ENCODE measurements at regions of chr1 and their contacts with region 1.

Region 1: GRCh38 chr1:218345673-218346390 is 696 bp downstream of the TGFB2 start:
- DNase-seq: peak; percentile 81
- H3K4me3 Mint-ChIP-seq: no peak overlapping the region
- H3K27ac Mint-ChIP-seq: no peak overlapping the region
- H3K4me1 Mint-ChIP-seq: peaks cover 41% of the 10 kb centered on the region
- H3K27me3 Mint-ChIP-seq: no peaks in the 10 kb centered on the region
- CTCF ChIP-seq: no peak

Region 2: GRCh38 chr1:218377143-218377660 is 31.4 kb after region 1 on chr1:
- CTCF ChIA-PET with region 1: interaction called, 8 read pairs
- POLR2A ChIA-PET with region 1: interaction called, 61 read pairs
- intact Hi-C with region 1: loop called (anchors 1 kb)
- DNase-seq: peak; percentile 99
- H3K4me3 Mint-ChIP-seq: peak overlapping the region; percentile 39
- H3K27ac Mint-ChIP-seq: peak overlapping the region; percentile 88
- H3K4me1 Mint-ChIP-seq: peaks cover 74% of the 10 kb centered on the region
- H3K27me3 Mint-ChIP-seq: no peaks in the 10 kb centered on the region
- CTCF ChIP-seq: no peak

Region 3: DNA sequence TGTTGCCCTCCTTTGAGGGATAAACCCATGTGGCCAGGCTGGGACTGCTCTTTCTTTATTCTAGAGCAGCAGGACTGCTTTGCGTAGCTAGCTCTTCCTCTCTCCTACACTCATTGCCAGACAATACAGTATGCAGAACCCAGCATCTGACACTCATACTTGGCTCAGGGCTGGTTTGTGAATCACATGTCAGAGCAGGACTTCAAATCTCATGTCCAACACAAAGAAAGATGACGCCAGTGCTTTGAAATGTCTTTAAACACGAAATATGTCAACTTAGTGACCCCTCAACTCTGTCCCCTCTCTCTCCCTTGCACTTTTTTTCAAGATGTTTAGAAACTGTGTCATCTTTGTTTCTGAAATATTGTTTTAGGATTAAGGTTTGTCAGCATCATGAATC is 134.3 kb after region 1 on chr1:
- CTCF ChIA-PET with region 1: interaction called, 8 read pairs
- POLR2A ChIA-PET with region 1: interaction called, 18 read pairs
- intact Hi-C with region 1: no loop called
- DNase-seq: peak; percentile 87
- H3K4me3 Mint-ChIP-seq: no peak overlapping the region
- H3K27ac Mint-ChIP-seq: peak overlapping the region; percentile 29
- H3K4me1 Mint-ChIP-seq: peaks cover 59% of the 10 kb centered on the region
- H3K27me3 Mint-ChIP-seq: no peaks in the 10 kb centered on the region
- CTCF ChIP-seq: no peak

Region 4: GRCh38 chr1:218521375-218522169 is 175.7 kb after region 1 on chr1:
- CTCF ChIA-PET with region 1: interaction called, 5 read pairs
- POLR2A ChIA-PET with region 1: no interaction called
- intact Hi-C with region 1: loop called (anchors 1 kb)
- DNase-seq: peak; percentile 92
- H3K4me3 Mint-ChIP-seq: no peak overlapping the region
- H3K27ac Mint-ChIP-seq: no peak overlapping the region
- H3K4me1 Mint-ChIP-seq: peaks cover 13% of the 10 kb centered on the region
- H3K27me3 Mint-ChIP-seq: no peaks in the 10 kb centered on the region
- CTCF ChIP-seq: peak; percentile 90

Region 5: DNA sequence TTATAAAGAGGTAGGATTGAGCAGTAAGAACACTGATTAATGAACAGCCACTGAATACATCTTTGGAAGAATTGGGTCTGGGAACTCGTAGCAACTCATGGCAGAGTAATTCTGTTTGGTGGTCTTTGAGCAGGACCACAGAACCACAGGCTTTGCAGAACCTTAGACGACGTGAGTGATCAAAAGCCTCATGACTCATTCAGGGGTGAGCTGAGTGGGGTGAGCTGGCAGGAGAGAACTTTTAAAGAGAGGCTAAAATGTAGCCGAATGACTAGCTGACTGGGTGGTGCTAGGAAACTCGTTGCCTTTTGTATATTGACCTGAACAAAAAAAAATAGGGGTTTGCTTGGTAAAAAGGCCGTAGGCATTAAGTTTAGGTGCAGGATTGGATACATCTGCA is 313.1 kb after region 1 on chr1:
- CTCF ChIA-PET with region 1: interaction called, 7 read pairs
- POLR2A ChIA-PET with region 1: no interaction called
- intact Hi-C with region 1: loop called (anchors 5 kb)
- DNase-seq: peak; percentile 82
- H3K4me3 Mint-ChIP-seq: no peak overlapping the region
- H3K27ac Mint-ChIP-seq: peak overlapping the region; percentile 17
- H3K4me1 Mint-ChIP-seq: peaks cover 39% of the 10 kb centered on the region
- H3K27me3 Mint-ChIP-seq: no peaks in the 10 kb centered on the region
- CTCF ChIP-seq: no peak

Region 6: DNA sequence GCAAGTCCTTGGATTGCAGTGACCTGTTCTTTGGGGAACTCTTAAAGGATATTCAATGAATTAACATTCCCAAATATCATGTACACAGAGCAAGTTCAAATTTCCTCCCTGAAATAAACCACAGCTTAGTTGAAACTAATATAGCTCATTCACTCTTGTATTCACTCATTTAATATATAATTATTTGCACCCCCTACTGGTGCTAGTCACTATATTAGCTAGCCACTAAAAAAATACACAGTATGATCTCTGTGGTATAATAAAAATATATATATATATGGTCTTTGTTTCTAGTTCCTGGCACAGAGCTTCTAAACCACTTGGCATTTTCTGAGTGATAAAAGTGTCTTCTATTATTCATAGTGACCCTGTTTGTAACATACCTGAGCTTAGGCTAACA is 650.5 kb after region 1 on chr1:
- CTCF ChIA-PET with region 1: interaction called, 3 read pairs
- POLR2A ChIA-PET with region 1: no interaction called
- intact Hi-C with region 1: loop called (anchors 1 kb)
- DNase-seq: peak; percentile 37
- H3K4me3 Mint-ChIP-seq: no peak overlapping the region
- H3K27ac Mint-ChIP-seq: no peak overlapping the region
- H3K4me1 Mint-ChIP-seq: no peaks in the 10 kb centered on the region
- H3K27me3 Mint-ChIP-seq: no peaks in the 10 kb centered on the region
- CTCF ChIP-seq: peak; percentile 38

Region 7: DNA sequence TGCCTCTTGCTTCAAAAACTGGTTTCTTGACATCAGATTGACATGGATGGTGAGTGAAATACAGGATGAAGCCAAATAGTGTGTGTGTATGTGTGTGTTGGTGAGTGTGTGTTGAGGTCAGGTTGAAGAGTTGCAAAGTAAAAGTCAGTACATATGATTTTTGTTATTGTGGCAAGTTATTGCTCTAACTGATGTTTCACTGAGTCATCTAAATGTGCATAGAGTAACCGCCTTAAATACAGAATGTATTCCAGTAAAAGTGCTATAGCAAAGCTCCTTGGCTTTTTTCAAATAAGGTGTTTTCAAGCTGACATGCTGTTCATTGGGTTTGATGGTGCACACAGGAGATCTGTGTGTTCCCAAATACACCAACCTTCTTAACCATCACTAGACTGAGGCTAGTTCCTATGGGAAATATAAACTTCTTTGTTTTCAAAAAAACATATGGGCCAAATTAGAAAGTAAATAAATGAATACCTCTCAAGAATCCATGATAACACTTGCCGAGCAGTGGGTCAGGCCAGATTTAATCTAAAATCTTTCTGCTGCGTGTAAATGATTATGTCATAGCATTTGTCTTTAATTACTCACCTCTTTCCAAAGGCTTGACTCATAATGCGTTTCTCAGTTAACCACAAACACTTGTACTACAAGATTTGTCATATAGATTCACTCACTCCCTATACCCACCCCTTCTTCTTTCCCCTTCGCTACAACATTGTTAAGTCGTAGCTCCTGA is 979.0 kb after region 1 on chr1:
- CTCF ChIA-PET with region 1: no interaction called
- POLR2A ChIA-PET with region 1: no interaction called
- intact Hi-C with region 1: loop called (anchors 10 kb)
- DNase-seq: peak; percentile 97
- H3K4me3 Mint-ChIP-seq: no peak overlapping the region
- H3K27ac Mint-ChIP-seq: no peak overlapping the region
- H3K4me1 Mint-ChIP-seq: peaks cover 16% of the 10 kb centered on the region
- H3K27me3 Mint-ChIP-seq: peaks cover 100% of the 10 kb centered on the region
- CTCF ChIP-seq: no peak

Measured in MCF 10A (cell line).